ENCODE measurements at regions of chr11 and their contacts with region 1.

Region 1: GRCh38 chr11:130002846-130003716 is 446 bp upstream of the PRDM10 start:
- DNase-seq: peak; percentile 89
- H3K4me3 Mint-ChIP-seq: peak overlapping the region; percentile 98
- H3K27ac Mint-ChIP-seq: peak overlapping the region; percentile 100
- H3K4me1 Mint-ChIP-seq: peaks cover 33% of the 10 kb centered on the region
- H3K27me3 Mint-ChIP-seq: peaks cover 7% of the 10 kb centered on the region

Region 2: DNA sequence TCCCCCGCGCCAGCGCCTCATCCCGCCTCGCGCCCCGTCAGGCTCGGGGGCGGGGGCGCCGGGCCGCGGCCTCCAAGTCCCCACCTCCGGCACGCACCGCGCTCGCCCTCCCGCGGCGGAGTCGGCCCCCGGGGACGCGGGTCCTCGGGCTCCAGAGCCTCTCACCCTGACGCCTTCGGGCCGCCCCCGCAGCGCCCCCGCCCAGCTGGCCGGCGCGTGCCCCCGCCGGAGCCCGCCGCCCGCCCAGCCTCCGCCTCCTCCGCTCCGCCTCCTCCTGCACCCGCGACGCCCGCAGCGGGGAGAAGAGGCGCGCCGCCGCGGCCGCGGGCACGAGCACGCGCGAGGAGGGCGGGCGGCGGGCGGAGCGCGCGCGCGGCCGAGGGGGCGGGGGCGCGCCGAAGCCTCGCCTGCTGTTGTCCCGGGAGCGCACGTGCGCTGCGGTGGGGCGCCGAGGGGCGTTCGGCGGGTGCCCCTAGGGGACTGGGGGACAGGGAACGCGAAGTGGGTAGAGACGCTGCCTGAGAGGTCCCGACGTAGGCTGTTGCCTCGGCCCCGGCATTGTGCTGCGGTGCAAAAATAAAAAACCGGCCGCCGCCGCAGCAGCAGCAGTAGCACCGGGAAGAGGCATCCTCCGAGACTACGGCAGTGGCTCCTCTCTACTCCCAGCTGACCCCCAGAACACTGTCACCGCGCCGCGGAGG is 723.6 kb before region 1 on chr11:
- intact Hi-C with region 1: loop called (anchors 2 kb)
- DNase-seq: peak; percentile 74
- H3K4me3 Mint-ChIP-seq: peak overlapping the region; percentile 79
- H3K27ac Mint-ChIP-seq: peak overlapping the region; percentile 81
- H3K4me1 Mint-ChIP-seq: peaks cover 40% of the 10 kb centered on the region
- H3K27me3 Mint-ChIP-seq: peaks cover 29% of the 10 kb centered on the region

Region 3: GRCh38 chr11:129815596-129816461 is 187.3 kb before region 1 on chr11 and contains the start of gene TMEM45B:
- intact Hi-C with region 1: loop called (anchors 2 kb)
- DNase-seq: no peak
- H3K4me3 Mint-ChIP-seq: peak within 1 kb of the TSS; percentile 69
- H3K27ac Mint-ChIP-seq: peak within 1 kb of the TSS; percentile 67
- H3K4me1 Mint-ChIP-seq: peaks cover 26% of the 10 kb centered on the region
- H3K27me3 Mint-ChIP-seq: peaks cover 46% of the 10 kb centered on the region
- total RNA-seq, gene TMEM45B: 0.24 and 0.26 TPM in 2 replicates

Region 4: DNA sequence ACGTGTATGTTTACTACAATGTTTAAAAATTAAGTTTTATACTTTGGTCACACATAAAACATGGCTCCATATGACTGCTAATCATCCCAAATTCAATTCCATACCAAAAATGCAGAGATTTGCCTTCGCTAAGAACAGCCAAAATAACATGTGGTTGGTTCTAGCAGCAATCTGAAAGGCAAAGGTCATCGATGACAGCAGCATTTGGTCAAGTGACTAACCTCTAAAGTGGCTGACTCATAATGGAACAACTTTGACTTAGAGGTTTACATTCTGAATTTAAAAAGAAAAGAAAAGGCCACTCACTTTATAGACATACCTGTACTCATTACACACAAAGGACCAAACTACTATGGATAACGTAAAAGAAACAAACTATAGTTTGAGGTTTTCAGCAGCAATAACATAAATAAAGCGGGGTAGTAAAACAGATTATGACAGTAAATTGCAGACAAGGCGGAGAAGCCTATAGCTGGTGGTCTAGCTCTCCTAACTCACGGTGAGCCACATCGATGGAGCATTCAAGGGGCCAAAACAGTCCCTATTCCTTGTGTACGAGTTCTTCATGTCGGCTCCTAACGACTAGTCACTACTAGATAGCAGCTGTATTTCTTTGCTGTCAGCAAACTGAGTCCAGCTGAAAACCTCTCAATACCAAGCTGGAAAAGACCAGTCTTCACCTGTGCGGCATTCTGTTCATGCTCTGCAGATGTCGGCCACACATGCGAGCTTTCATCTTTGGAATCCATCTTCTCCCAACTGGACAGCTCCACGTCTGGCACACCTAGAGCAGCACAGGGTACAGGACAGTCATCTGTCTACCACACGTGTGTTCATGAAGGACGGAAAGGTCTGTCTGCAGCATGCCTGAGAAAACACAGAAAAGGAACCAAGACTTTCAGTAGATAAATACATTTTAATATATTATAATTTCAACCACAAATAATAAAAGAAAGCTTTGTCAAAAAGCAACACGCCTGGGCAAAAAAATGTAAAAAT is 42.6 kb before region 1 on chr11:
- intact Hi-C with region 1: loop called (anchors 1 kb)
- DNase-seq: no peak
- H3K4me3 Mint-ChIP-seq: no peak overlapping the region
- H3K27ac Mint-ChIP-seq: peak overlapping the region; percentile 64
- H3K4me1 Mint-ChIP-seq: peaks cover 10% of the 10 kb centered on the region
- H3K27me3 Mint-ChIP-seq: no peaks in the 10 kb centered on the region

Region 5: GRCh38 chr11:130131961-130132850 is 129.1 kb after region 1 on chr11:
- intact Hi-C with region 1: loop called (anchors 1 kb)
- DNase-seq: peak; percentile 46
- H3K4me3 Mint-ChIP-seq: no peak overlapping the region
- H3K27ac Mint-ChIP-seq: no peak overlapping the region
- H3K4me1 Mint-ChIP-seq: no peaks in the 10 kb centered on the region
- H3K27me3 Mint-ChIP-seq: no peaks in the 10 kb centered on the region

Region 6: GRCh38 chr11:130916238-130916855 is 913.3 kb after region 1 on chr11 and contains the start of gene SNX19:
- intact Hi-C with region 1: loop called (anchors 2 kb)
- DNase-seq: peak; percentile 90
- H3K4me3 Mint-ChIP-seq: peak within 1 kb of the TSS; percentile 87
- H3K27ac Mint-ChIP-seq: peak within 1 kb of the TSS; percentile 63
- H3K4me1 Mint-ChIP-seq: peaks cover 33% of the 10 kb centered on the region
- H3K27me3 Mint-ChIP-seq: peaks cover 8% of the 10 kb centered on the region
- total RNA-seq, gene SNX19: 58.5 and 60.7 TPM in 2 replicates